ENCODE measurements at regions of chr15 and their contacts with region 1.

Region 1: DNA sequence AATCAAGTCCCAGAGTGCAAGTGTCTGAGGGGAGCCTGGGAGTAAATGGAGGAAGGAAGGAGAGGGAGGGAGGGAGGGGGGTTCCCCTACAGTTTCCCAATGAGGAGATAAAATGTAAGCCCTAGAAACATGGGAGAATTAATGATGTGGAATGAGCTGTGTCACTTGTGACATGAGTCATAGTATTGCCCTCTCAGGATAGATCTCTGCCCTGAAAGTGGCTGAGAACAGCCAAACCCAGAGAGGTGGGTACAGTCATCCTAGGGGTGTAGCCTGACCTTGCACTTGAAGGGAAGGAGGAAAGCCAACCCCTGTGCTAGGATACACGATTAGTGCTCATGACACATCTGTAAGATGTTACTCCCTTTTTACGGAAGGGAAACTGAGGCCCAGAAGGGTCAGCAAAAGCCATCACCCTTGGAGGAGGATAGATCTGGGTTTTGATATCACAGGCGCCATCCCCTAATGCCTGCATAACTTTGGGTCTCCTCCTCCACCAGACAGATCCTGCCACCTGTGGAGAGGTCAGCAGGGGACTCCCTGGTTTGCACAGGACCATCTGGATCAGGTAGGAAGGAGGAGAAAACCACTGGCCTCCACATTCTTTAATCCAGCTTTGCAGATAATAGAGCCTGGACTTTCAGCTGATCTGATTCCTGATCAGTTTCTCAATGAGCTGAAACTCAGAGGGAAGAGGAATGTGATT is 23.1 kb upstream of the USP3 start:
- DNase-seq: peak in 2 of 3 donors; percentile 42 to 47
- H3K4me3 ChIP-seq: no peak overlapping the region
- H3K27ac ChIP-seq: no peak overlapping the region
- H3K4me1 ChIP-seq: peaks cover 16 to 36% (median 22%) of the 10 kb centered on the region in 4 experiments
- H3K27me3 ChIP-seq: no peaks in the 10 kb centered on the region

Region 2: GRCh38 chr15:63466378-63467192 is 14.7 kb before region 1 on chr15:
- CTCF ChIA-PET with region 1: interaction called, 17 read pairs
- POLR2A ChIA-PET with region 1: no interaction called
- DNase-seq: peak; percentile 75 to 82 (median 77)
- H3K4me3 ChIP-seq: no peak overlapping the region
- H3K27ac ChIP-seq: no peak overlapping the region
- H3K4me1 ChIP-seq: peaks cover 0 to 12% (median 7%) of the 10 kb centered on the region in 4 experiments
- H3K27me3 ChIP-seq: no peaks in the 10 kb centered on the region

Region 3: GRCh38 chr15:63497642-63498467 is 16.6 kb after region 1 on chr15:
- CTCF ChIA-PET with region 1: interaction called, 11 read pairs
- POLR2A ChIA-PET with region 1: no interaction called
- DNase-seq: peak; percentile 83 to 94 (median 93)
- H3K4me3 ChIP-seq: peak overlapping the region in 3 of 7 experiments; percentile 34 to 43 (median 40)
- H3K27ac ChIP-seq: no peak overlapping the region
- H3K4me1 ChIP-seq: peaks cover 17 to 52% (median 36%) of the 10 kb centered on the region in 4 experiments
- H3K27me3 ChIP-seq: peaks cover 0 to 11% (median 3%) of the 10 kb centered on the region in 5 experiments

Region 4: GRCh38 chr15:63573533-63573932 is 92.3 kb after region 1 on chr15:
- CTCF ChIA-PET with region 1: no interaction called
- POLR2A ChIA-PET with region 1: no interaction called
- DNase-seq: no peak
- H3K4me3 ChIP-seq: no peak overlapping the region
- H3K27ac ChIP-seq: no peak overlapping the region
- H3K4me1 ChIP-seq: no peaks in the 10 kb centered on the region
- H3K27me3 ChIP-seq: no peaks in the 10 kb centered on the region

Region 5: DNA sequence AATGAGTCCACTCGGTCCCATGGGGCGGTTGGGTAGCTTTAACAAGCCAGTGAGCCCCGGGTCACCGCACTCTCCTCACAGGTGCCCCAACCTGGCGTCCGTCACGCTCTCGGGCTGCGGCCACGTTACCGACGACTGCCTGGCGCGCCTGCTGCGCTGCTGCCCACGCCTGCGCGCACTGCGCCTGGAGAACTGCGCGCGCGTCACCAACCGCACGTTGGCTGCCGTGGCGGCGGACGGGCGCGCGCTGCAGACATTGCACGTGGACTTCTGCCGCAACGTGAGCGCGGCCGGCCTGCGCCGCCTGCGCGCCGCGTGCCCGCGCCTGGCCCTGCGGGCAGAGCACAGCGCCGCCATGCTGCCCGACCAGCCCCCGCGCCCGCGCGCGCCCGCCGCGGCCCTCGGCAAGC is 119.4 kb after region 1 on chr15:
- CTCF ChIA-PET with region 1: interaction called, 10 read pairs
- POLR2A ChIA-PET with region 1: no interaction called
- DNase-seq: peak; percentile 91 to 97 (median 96)
- H3K4me3 ChIP-seq: peak overlapping the region; percentile 49 to 95 (median 86)
- H3K27ac ChIP-seq: peak overlapping the region in 1 of 2 experiments; percentile 67
- H3K4me1 ChIP-seq: peaks cover 5 to 71% (median 54%) of the 10 kb centered on the region in 4 experiments
- H3K27me3 ChIP-seq: no peaks in the 10 kb centered on the region

Measured in common myeloid progenitor, CD34-positive (primary cell).